ENCODE measurements at regions of chr9 and their contacts with region 1.

Region 1: DNA sequence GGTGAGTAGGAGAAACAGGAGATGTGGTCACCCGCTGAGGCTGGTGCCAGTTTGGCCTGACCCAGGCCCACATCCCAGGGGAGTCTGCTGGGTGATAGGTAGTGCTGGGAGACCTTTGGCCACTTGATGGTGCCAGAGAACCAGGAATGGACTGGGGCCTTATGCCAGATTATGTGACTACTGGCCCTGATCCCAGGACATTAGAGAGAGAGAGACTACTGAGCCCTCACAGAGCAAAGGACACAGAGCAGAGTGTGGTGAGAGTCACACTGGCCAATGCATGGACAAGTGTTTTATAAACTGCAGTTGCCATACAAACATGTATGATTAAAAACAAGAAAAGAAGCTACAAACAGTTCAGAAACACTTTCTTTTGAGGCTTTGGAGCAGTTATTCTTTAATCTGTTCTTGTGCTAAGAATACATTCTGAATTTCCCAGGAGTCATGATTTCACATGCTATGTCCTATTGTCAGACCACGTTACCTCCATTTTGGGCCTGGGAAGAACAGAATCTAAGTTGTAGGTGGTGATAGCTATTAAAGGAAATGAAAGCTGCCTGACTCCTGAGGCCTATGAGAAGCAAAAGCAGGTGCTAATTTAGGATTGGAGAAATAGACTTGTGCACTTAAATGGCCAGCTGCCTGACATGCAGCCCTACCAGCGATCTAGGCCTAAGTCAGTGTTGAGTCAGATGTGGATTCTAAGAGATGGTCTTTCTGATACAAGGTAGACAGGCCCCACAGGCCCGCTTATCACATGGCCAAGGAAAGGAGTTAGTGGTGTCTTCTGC is 32.6 kb upstream of the TMOD1 start:
- DNase-seq: peak; percentile 46 to 70
- ATAC-seq: peak; percentile 89 to 99
- H3K4me3 ChIP-seq: no peak overlapping the region
- H3K27ac ChIP-seq: no peak overlapping the region
- H3K4me1 ChIP-seq: no peaks in the 10 kb centered on the region
- CTCF ChIP-seq: peak; percentile 80
- EP300 ChIP-seq: no peak
- POLR2A ChIP-seq: no peak
- RAD21 ChIP-seq: peak; percentile 88 to 94

Region 2: DNA sequence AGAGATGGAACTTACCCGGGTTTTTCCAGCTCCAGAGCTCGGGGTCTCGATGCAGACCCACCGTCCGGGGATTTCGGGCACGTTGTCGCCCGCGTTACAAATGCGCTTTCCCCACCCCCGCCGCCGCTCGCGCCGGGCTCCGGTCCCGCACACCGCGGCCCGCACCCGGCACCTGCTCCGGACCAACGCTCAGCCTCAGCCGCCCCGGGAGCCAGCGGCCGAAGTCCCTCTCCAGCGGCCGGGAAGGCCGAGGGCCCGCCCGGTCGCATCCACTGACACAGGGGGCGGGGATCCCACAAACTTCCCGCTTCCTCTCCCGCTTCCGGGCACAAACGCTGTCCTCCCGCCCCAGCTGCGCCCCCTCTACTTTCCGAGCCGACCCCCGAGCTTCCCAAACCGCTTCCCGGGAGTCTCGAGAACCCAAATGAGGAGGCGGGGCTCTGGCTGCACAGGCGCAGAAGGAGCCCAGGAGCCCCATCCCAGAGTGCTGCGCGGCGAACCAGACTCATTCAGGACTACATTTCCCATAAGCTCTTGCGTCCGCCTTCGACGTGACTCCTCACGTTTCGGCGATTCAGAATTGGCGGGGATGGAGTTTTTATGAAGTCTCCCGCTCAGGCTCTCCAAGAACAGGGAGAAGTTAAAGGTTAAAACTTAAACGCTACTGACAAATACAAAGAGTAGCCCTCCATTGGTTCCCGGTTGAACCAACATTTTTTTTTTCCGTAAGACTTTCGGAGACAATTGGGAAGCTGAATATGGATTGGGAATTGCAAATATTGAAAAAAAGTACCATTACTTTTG is 614.6 kb before region 1 on chr9 and contains the start of gene ZNF782:
- CTCF ChIA-PET with region 1: interaction called, 19 read pairs
- POLR2A ChIA-PET with region 1: no interaction called
- DNase-seq: peak; percentile 83 to 95
- ATAC-seq: peak; percentile 94 to 99
- H3K4me3 ChIP-seq: peak within 1 kb of the TSS; percentile 65
- H3K27ac ChIP-seq: peak within 1 kb of the TSS; percentile 69 to 89
- H3K4me1 ChIP-seq: no peaks in the 10 kb centered on the region; the same call in 2 of the 3 replicates
- CTCF ChIP-seq: no peak
- EP300 ChIP-seq: no peak
- POLR2A ChIP-seq: peak; percentile 65
- RAD21 ChIP-seq: no peak
- polyA plus RNA-seq, gene ZNF782: 2.1 and 2.7 TPM in 2 replicates

Region 3: GRCh38 chr9:97487107-97487506 is 18.3 kb after region 1 on chr9:
- CTCF ChIA-PET with region 1: interaction called, 42 read pairs
- POLR2A ChIA-PET with region 1: no interaction called
- DNase-seq: peak in 1 of 2 experiments; percentile 37
- ATAC-seq: peak; percentile 50 to 74; a peak in 5 of 6 replicates
- H3K4me3 ChIP-seq: no peak overlapping the region
- H3K27ac ChIP-seq: no peak overlapping the region
- H3K4me1 ChIP-seq: no peaks in the 10 kb centered on the region
- CTCF ChIP-seq: peak; percentile 7; the same call in 1 of the 3 replicates
- EP300 ChIP-seq: no peak
- POLR2A ChIP-seq: no peak
- RAD21 ChIP-seq: 0 out of 5 replicates have a peak, but pooled peaks of 1 of the 2 experiments have one; percentile 19

Region 4: GRCh38 chr9:97510797-97511761 is 42.2 kb after region 1 on chr9:
- CTCF ChIA-PET with region 1: interaction called, 12 read pairs
- POLR2A ChIA-PET with region 1: no interaction called
- DNase-seq: peak in 1 of 2 experiments; percentile 51
- ATAC-seq: peak; percentile 33 to 70; a peak in 3 of 6 replicates
- H3K4me3 ChIP-seq: no peak overlapping the region
- H3K27ac ChIP-seq: no peak overlapping the region
- H3K4me1 ChIP-seq: peaks cover 11% of the 10 kb centered on the region; the same call in 2 of the 3 replicates
- CTCF ChIP-seq: no peak
- EP300 ChIP-seq: no peak
- POLR2A ChIP-seq: no peak
- RAD21 ChIP-seq: no peak

Region 5: GRCh38 chr9:97531888-97532376 is 63.1 kb after region 1 on chr9:
- CTCF ChIA-PET with region 1: interaction called, 12 read pairs
- POLR2A ChIA-PET with region 1: no interaction called
- DNase-seq: no peak
- ATAC-seq: no peak
- H3K4me3 ChIP-seq: no peak overlapping the region
- H3K27ac ChIP-seq: no peak overlapping the region
- H3K4me1 ChIP-seq: peaks cover 7% of the 10 kb centered on the region; the same call in 1 of the 3 replicates
- CTCF ChIP-seq: no peak
- EP300 ChIP-seq: no peak
- POLR2A ChIP-seq: no peak
- RAD21 ChIP-seq: no peak

Region 6: DNA sequence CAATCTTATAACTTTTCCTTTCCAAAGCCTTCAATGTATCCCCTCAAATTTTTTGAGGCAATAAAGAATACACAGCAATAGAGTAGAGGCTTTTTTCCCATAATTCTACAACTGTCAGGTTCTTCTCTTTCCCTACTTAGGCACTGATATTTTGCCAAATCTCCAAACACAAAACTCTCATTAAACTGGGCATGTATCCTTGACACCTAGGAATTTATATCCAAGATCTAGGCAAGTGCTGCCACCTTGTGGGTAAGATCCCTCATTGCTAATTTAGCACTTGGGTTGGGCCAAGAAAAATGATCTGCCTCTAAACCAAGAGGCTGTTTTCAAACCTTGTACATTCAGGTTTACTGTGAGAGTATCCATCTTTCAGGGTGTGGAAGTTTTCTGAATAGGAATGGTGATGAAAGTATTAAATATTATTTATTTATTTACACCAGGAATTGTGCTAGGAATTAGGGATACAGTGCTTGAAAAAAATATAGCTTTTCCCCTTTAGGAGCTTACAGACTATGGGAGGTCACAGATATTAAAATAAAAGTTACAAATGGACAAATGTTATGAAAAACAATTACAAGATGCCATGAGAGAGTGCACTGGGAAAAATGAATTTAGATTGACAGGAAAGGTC is 146.7 kb after region 1 on chr9:
- CTCF ChIA-PET with region 1: interaction called, 247 read pairs
- POLR2A ChIA-PET with region 1: no interaction called
- DNase-seq: peak; percentile 64 to 69
- ATAC-seq: peak; percentile 68 to 84; a peak in 4 of 6 replicates
- H3K4me3 ChIP-seq: no peak overlapping the region
- H3K27ac ChIP-seq: no peak overlapping the region
- H3K4me1 ChIP-seq: no peaks in the 10 kb centered on the region
- CTCF ChIP-seq: peak; percentile 88
- EP300 ChIP-seq: no peak
- POLR2A ChIP-seq: no peak
- RAD21 ChIP-seq: peak; percentile 74 to 81